ENCODE measurements at regions of chr17 and their contacts with region 1.

Region 1: DNA sequence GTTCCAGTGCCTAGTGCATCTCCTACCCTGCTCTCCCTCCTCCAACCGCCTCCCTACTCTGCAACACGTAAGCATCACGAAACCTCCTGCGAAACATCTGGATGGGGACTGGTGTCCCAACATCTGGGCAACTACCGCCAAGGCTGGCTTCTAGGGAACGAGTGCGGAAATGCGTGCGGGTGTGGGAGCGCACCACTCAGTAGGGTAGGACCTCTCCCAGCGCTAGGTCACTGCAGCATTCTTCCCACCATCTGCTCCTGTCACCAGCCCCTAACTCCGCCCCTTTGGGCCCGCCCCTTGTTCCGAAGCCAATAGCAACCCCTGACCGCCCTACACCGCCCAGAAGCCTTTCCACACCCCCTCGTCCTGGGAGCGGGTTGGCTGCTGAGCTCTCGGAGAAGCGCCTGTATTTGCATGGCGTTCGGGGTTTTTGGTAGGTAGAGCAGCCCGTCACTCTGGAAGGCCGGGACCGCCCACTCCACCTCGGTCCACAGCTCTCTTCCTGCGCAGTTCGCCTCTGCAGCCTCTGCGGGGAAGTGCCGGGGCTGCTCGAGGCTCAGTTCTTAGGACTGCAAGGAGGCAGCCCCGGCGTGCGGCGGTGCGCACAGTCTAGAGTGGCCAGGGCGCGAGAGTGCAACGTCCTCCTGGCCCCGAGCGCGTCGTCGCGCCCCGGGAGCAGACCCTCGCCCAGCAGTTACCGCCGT is at the start of gene HS3ST3B1:
- DNase-seq: peak; percentile 100
- ATAC-seq: peak; percentile 90
- H3K4me3 Mint-ChIP-seq: peak within 1 kb of the TSS; percentile 92
- H3K27ac Mint-ChIP-seq: peak within 1 kb of the TSS; percentile 92
- H3K4me1 Mint-ChIP-seq: peaks cover 51% of the 10 kb centered on the region
- H3K27me3 Mint-ChIP-seq: peaks cover 28% of the 10 kb centered on the region
- CTCF ChIP-seq: no peak
- total RNA-seq, gene HS3ST3B1: 4.9 to 5.1 TPM

Region 2: DNA sequence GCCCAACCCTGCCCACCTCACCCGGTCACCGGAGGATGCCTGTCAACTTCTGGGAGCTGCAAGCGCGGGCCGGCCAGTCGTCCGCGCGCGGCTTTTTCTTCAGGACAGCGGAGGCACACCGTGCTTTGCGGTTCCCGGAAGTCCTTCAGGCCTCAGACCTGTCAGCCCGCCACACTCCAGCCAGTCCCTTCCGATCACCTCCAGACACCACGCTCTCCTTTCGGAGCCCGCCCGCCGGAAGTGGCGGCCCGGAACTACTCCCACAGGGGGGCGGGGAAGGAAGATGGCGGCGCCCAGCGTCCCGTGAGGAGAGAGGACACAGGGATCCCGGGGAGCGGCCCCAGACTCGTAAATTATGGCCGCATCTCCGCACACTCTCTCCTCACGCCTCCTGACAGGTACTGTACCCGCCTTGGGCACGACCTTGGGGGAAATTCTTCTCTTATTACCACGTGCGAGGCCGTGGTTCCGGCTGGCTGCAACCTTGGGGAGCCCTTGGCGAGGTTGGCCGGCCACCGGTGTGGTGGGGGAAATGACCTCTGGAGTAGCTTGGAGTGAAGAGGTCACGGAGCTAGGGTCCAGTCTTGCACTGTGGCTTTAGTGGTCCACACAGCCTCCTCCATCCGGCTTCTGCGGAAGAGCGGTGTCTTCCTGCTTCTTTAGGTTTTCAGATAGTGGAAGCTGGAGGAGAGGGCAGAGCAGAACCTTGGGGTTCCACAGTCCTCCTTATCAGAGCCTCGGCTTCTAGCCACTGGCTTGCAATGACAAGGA is 231.3 kb before region 1 on chr17 and contains the start of gene COX10:
- CTCF ChIA-PET with region 1: interaction called, 4 read pairs
- POLR2A ChIA-PET with region 1: interaction called, 18 read pairs
- intact Hi-C with region 1: loop called (anchors 2 kb)
- DNase-seq: peak; percentile 88
- ATAC-seq: peak; percentile 98
- H3K4me3 Mint-ChIP-seq: peak within 1 kb of the TSS; percentile 97
- H3K27ac Mint-ChIP-seq: peak within 1 kb of the TSS; percentile 96
- H3K4me1 Mint-ChIP-seq: peaks cover 45% of the 10 kb centered on the region
- H3K27me3 Mint-ChIP-seq: no peaks in the 10 kb centered on the region
- CTCF ChIP-seq: no peak
- total RNA-seq, gene COX10: 26.0 to 28.6 TPM

Region 3: GRCh38 chr17:14318918-14319205 is 18.1 kb after region 1 on chr17:
- CTCF ChIA-PET with region 1: interaction called, 14 read pairs
- POLR2A ChIA-PET with region 1: interaction called, 6 read pairs
- intact Hi-C with region 1: no loop called
- DNase-seq: peak; percentile 66
- ATAC-seq: peak; percentile 60
- H3K4me3 Mint-ChIP-seq: no peak overlapping the region
- H3K27ac Mint-ChIP-seq: no peak overlapping the region
- H3K4me1 Mint-ChIP-seq: peaks cover 79% of the 10 kb centered on the region
- H3K27me3 Mint-ChIP-seq: no peaks in the 10 kb centered on the region
- CTCF ChIP-seq: no peak

Region 4: DNA sequence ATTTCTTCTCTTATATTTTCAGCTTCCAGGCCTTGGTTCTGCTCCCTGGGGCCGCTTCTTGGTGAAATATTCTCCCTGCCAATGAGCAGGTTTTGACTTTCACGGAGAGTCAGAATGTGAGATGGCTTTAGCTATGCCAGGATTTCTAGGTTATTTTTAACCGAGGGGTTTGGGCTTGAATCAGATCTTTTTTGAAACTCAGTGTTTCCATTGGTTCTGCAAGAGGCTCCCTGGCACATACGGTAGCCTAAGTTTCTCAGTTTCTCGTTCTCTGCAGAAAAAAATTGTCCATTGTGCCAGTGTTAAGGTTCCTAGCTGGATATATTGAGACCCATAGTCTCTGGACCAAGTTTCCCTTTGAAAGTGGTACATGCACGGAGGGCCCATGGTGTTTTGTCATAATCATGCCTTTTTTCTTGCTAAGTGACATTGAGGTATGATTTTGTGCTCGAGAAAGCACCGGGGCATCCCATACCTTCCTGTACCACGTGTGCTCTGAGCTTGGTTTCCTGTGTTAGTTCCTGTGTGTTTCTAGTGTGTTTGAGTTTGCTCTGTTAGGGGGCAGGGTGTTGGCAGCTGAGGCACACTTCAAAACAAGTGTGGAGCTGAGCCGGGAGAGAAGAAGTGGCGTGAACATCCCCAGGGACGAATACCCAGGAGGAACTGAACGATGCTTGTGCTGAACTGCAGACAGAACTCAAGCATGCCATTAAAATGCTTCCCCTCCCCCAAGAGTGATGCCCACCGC is 127.3 kb after region 1 on chr17:
- CTCF ChIA-PET with region 1: interaction called, 7 read pairs
- POLR2A ChIA-PET with region 1: interaction called, 13 read pairs
- intact Hi-C with region 1: no loop called
- DNase-seq: peak; percentile 77
- ATAC-seq: peak; percentile 96
- H3K4me3 Mint-ChIP-seq: peak overlapping the region; percentile 60
- H3K27ac Mint-ChIP-seq: peak overlapping the region; percentile 90
- H3K4me1 Mint-ChIP-seq: peaks cover 58% of the 10 kb centered on the region
- H3K27me3 Mint-ChIP-seq: no peaks in the 10 kb centered on the region
- CTCF ChIP-seq: no peak